Endothelial cell of umbilical vein (primary cell): ENCODE measurements at regions of chr10 and their contacts with region 1.

Region 1: DNA sequence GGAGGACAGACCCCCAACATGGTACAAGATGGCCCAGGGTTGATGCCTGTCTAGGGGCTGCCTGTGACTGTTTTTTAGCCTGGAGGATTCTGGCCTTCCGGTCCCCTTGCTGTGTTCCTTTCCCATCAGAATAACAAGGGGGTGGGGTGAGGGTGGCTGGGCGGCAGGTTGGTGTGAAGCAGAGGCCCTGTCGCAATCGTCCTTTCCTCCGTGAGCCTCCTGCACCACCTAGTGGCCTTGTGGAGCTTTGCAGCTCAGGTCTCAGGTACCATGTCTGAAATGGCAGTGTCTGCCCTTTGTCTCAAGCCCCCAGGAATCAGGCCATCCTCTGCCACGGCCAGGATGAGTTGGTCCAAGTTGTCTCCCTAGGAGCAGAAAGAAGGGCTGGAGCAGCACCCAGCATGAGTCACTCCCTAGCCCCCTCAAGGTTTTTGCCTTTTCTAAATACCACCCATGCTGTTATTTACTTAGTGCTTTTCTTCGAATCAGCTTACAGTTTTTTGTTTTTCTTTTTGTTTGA is 24.2 kb downstream of the TACR2 start:
- DNase-seq: peak; percentile 78
- H3K4me3 ChIP-seq: no peak overlapping the region
- H3K27ac ChIP-seq: no peak overlapping the region
- H3K4me1 ChIP-seq: peaks cover 4% of the 10 kb centered on the region
- H3K27me3 ChIP-seq: no peaks in the 10 kb centered on the region
- CTCF ChIP-seq: peak; percentile 92 to 93
- POLR2A ChIP-seq: no peak

Region 2: DNA sequence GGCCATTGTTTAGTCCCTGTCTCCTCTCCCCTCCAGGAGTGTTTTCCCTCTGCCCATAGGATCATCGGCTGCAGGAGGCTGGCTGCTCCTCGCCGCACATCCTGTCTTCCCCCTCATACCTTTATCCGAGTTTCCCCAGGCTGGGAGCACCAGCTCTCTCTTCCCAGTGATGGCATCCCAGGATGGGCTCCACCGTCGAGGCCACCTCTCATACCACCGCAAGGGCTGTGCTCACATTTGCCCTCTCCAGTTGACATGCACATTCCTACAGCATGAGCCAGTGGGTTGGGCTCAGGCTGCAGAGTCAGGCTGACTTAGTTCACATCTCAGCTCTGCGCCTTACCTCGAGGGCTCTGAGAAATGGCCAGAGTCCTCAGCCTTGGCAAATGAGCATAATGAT is 160.3 kb before region 1 on chr10:
- CTCF ChIA-PET with region 1: interaction called, 103 read pairs
- POLR2A ChIA-PET with region 1: no interaction called
- dilution Hi-C with region 1: loop called (anchors 25 kb)
- intact Hi-C with region 1: loop called (anchors 1 kb)
- DNase-seq: no peak
- H3K4me3 ChIP-seq: no peak overlapping the region
- H3K27ac ChIP-seq: no peak overlapping the region
- H3K4me1 ChIP-seq: peaks cover 12% of the 10 kb centered on the region
- H3K27me3 ChIP-seq: no peaks in the 10 kb centered on the region
- CTCF ChIP-seq: no peak
- POLR2A ChIP-seq: no peak

Region 3: DNA sequence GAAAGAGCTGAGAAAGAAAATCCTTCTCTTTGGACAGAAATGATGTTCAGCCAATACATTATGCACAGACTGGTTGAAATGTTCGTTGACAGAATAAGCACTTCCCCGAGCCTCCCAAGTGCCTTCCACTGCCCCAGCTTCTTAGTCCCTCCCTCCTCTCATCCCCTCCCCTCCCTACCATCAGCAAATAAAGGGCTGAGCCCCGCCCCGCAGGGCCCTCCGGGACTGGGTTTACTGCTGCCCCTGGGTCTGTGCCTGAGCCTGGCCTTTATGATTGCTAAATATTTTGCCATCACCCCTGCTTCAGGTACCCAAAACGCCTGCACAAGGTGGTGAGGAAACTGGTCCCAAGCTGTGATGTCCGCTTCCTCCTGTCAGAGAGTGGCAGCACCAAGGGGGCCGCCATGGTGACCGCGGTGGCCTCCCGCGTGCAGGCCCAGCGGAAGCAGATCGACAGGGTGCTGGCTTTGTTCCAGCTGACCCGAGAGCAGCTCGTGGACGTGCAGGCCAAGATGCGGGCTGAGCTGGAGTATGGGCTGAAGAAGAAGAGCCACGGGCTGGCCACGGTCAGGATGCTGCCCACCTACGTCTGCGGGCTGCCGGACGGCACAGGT is 144.3 kb before region 1 on chr10:
- CTCF ChIA-PET with region 1: interaction called, 103 read pairs
- POLR2A ChIA-PET with region 1: interaction called, 11 read pairs
- dilution Hi-C with region 1: loop called (anchors 25 kb)
- intact Hi-C with region 1: no loop called
- DNase-seq: no peak
- H3K4me3 ChIP-seq: no peak overlapping the region
- H3K27ac ChIP-seq: no peak overlapping the region
- H3K4me1 ChIP-seq: no peaks in the 10 kb centered on the region
- H3K27me3 ChIP-seq: no peaks in the 10 kb centered on the region
- CTCF ChIP-seq: no peak
- POLR2A ChIP-seq: no peak

Region 4: GRCh38 chr10:69327463-69328379 is 64.8 kb before region 1 on chr10:
- CTCF ChIA-PET with region 1: interaction called, 10 read pairs
- POLR2A ChIA-PET with region 1: no interaction called
- dilution Hi-C with region 1: no loop called
- intact Hi-C with region 1: no loop called
- DNase-seq: peak; percentile 56
- H3K4me3 ChIP-seq: no peak overlapping the region
- H3K27ac ChIP-seq: peak overlapping the region; percentile 30
- H3K4me1 ChIP-seq: peaks cover 22% of the 10 kb centered on the region
- H3K27me3 ChIP-seq: no peaks in the 10 kb centered on the region
- CTCF ChIP-seq: no peak
- POLR2A ChIP-seq: no peak

Region 5: DNA sequence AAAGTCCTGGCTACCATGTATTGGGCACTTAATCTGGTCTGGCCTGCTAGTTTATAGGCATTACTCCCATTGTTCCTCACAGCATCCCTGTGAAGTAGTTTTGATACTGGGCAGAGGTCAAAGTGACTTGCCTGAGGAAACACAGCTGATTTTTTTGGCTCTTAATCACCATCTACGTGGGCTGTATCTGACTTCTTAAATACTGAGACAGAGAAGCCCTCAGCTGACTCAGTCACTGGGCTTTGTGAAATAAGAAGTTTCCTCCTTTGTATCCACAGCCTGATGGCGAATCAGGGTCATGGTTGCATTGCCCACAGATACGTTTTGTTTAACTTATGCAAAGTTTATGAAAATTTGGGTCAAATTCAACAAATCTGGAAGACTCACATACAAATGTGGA is 11.0 kb after region 1 on chr10:
- CTCF ChIA-PET with region 1: interaction called, 21 read pairs
- POLR2A ChIA-PET with region 1: interaction called, 4 read pairs
- dilution Hi-C with region 1: no loop called
- intact Hi-C with region 1: no loop called
- DNase-seq: peak; percentile 66
- H3K4me3 ChIP-seq: no peak overlapping the region
- H3K27ac ChIP-seq: no peak overlapping the region
- H3K4me1 ChIP-seq: peaks cover 6% of the 10 kb centered on the region
- H3K27me3 ChIP-seq: no peaks in the 10 kb centered on the region
- CTCF ChIP-seq: no peak
- POLR2A ChIP-seq: no peak